Right ventricle myocardium inferior (tissue), 1 donor: ENCODE measurements at regions of chr1 and their contacts with region 1.

Region 1: DNA sequence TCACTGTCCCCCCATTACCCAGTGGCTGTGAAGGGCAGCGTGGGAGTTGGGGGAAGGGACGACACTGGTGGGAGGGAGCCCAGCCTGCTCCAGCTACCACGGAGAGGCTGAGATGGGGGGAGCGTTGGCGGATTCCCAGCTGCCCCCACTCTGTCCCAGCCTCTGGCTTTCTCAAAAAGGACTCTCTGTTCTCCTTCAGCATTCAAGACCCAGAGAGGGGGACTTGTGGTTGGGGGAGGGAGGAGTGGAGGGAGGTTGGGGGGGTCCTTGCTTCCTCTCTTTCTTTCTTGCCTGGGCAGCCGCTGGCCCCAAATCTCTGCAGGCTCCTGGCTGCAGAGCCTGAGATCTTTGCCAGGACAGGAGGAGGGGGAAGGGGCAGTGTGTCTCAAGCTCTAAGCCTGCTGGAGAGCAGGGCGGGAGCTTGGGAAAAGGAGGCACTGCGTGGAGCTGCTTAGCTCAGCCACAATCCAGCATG is 2.2 kb downstream of the ATP1A2 start:
- DNase-seq: no peak
- ATAC-seq: peak; percentile 71

Region 2: GRCh38 chr1:160006312-160006940 is 111.3 kb before region 1 on chr1:
- intact Hi-C with region 1: no loop called
- DNase-seq: peak; percentile 83
- ATAC-seq: peak; percentile 57

Region 3: GRCh38 chr1:160085686-160086455 is 31.9 kb before region 1 on chr1:
- intact Hi-C with region 1: no loop called
- DNase-seq: peak; percentile 91
- ATAC-seq: peak; percentile 74

Region 4: GRCh38 chr1:160098852-160099561 is 18.7 kb before region 1 on chr1:
- intact Hi-C with region 1: no loop called
- DNase-seq: peak; percentile 98
- ATAC-seq: peak; percentile 92

Region 5: GRCh38 chr1:160131803-160132565 is 14.2 kb after region 1 on chr1:
- intact Hi-C with region 1: loop called (anchors 1 kb)
- DNase-seq: peak; percentile 75
- ATAC-seq: peak; percentile 90

Region 6: DNA sequence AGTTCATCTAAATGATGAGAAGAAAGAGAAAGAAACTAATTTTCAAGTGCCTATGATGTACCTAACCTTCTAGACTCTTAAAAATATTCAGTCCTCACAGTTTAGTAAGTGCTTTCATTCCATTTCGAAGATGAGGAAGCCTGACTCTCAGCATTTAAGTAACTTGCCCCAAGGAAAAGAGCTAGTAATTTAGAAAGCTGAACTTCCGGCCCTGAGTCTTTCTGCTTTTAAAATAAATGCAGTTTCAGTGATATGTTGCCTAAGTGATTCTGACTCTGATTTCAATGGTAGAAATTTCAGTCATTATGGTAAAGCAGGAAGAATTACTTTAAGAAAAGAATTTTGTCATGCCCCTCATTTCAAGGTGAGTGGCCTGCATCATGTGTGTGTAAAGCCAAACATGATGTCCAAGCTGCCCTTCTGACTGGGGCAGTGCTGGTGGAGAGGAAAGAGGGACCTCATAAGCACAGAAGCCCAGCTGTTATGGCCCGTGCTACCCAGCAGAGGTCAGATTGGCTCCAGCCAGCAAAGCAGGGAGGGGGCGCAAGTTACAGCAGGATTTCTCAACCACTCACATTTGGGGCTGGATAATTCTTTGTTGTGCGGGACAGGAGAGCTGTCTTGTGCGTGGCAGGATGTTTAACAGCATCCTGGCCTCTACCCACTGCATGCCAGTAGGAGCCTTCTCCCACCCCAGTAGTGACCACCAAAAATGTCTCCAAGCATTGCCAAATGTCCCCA is 44.4 kb after region 1 on chr1:
- intact Hi-C with region 1: loop called (anchors 5 kb)
- DNase-seq: no peak
- ATAC-seq: peak; percentile 43

Region 7: GRCh38 chr1:160205242-160206035 is 87.7 kb after region 1 on chr1 and contains the start of gene PEA15:
- intact Hi-C with region 1: loop called (anchors 5 kb)
- DNase-seq: peak; percentile 86
- ATAC-seq: peak; percentile 88
- total RNA-seq, gene PEA15: 283 TPM

Region 8: DNA sequence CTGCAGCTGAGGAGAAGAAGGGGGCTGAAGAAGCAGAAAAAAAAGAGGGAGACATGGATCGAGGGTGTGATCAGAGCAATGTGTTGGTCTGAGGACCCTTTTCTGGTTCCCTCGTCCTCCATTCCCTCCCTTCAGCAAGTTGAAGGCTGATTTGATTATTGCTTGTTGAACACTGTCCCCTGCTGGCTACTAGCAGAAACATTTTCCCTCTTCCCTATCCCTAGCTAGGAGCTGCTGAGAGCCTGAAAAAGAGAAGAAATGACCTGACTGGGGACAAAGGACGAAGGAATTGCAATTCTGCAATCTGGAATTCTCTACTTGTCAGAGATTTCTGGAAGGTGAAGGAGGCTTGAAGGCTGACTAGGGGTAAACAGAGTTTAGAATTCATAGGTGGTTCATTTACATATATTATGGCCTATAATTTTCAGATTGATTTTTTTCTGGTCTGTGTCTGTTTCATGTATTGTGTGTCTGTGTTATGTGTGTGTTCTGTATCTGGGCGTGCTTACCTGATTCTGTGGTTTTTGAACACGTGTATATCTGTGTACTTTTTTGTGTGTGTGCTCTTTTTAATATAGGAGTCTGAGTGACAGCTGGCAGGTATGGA is 258.9 kb after region 1 on chr1:
- intact Hi-C with region 1: no loop called
- DNase-seq: no peak
- ATAC-seq: peak; percentile 81